GM12878 (cell line): ENCODE measurements at regions of chr17 and their contacts with region 1.

Region 1: DNA sequence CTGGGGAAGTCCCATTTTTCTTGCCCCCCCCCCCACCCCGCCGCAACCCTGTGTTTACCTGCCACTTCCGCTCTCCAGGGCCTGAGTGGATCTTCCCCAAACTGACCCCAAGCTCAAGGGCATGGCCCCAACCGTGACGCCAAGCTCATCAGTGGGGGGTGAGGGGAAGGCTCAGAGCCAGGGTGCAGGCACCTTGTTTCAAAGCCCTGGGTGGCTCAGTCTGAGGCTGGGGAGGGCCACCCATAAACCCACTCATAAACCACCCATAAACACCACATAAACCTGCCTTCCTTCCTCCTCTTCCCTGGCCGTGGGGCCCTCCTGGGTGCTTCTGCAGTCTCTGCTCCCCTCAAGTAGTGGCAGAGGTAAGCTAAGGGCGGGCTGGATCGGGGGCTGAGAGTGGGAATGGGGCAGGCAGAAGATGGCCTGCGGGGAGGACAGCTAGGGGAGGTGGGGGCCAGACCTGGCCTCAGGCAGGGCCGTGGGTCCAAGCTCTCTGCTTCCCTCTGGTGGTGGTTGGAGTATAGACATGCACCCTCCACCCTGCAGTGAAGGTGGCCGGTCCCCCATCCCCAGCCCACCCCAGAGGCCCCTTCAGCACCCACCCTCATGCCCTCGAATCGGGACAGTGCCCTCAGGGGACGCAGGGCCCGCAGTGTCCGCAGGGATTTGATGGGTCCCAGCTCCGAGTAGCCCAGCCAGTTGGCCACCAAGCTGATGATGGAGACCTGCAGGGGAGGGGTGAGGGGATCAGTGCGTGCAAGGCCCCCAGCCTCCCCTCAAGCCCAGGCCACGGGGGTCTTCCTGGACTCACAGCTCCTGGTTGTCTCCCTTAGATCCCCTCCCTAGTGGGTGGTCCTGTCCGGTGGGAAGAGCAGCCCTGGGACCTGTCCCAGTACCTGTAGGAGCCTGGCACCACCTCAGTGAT is 14.6 kb upstream of the CD79B start:
- DNase-seq: no peak
- ATAC-seq: peak; percentile 92
- H3K4me3 ChIP-seq: peak overlapping the region; percentile 39; the same call in 1 of the 2 replicates
- H3K27ac ChIP-seq: peak overlapping the region; percentile 86
- H3K4me1 ChIP-seq: peaks cover 18% of the 10 kb centered on the region
- H3K27me3 ChIP-seq: no peaks in the 10 kb centered on the region
- CTCF ChIP-seq: peak; percentile 65 to 85 (median 78)
- EP300 ChIP-seq: no peak
- POLR2A ChIP-seq: 0 out of 2 replicates have a peak, but pooled peaks have one; percentile 49
- RAD21 ChIP-seq: peak; percentile 65

Region 2: GRCh38 chr17:63880681-63881080 is 66.0 kb before region 1 on chr17:
- CTCF ChIA-PET with region 1: no interaction called
- POLR2A ChIA-PET with region 1: no interaction called
- RAD21 ChIA-PET with region 1: no interaction called
- SMC1A ChIA-PET with region 1: no interaction called
- in situ Hi-C with region 1: no loop called
- intact Hi-C with region 1: no loop called
- DNase-seq: no peak
- ATAC-seq: no peak
- H3K4me3 ChIP-seq: no peak overlapping the region
- H3K27ac ChIP-seq: no peak overlapping the region
- H3K4me1 ChIP-seq: no peaks in the 10 kb centered on the region
- H3K27me3 ChIP-seq: no peaks in the 10 kb centered on the region
- CTCF ChIP-seq: no peak
- EP300 ChIP-seq: no peak
- POLR2A ChIP-seq: no peak
- RAD21 ChIP-seq: no peak

Region 3: DNA sequence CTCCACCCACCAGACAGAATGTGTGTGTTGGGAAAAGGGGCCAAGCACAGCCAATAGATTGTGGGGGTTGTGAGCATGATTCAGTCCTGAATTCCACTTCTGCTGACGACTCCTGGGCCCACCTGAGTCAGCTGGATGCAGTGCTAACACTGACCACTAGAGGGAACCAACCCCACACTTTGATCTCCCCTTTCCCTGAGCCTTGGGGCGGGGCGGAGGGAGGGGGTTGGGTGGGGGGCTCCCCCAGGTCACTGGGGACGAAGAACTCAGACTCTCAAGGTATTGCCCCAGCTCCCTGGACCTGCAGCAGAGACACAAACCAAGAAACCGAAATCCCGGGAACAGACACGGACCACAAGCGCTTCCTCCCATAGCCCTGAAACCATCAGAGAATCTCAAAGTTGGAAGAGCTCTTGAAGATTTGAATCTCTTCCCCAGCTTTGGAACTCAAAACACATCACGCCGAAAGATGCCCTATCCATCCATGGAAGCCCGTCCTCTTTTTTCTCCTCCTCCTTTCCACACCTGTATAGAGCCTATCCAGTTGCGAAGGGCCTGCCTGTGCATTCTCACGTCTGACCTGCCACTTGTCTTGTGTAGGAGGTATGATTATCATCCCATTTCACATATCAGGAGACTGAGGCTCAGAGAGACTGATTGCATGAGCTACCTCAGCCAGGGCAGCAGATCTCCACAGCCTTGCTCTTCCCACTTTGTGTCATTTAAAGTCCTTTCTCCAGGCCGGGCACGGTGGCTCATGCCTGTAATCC is 34.9 kb before region 1 on chr17:
- CTCF ChIA-PET with region 1: interaction called, 481 read pairs
- POLR2A ChIA-PET with region 1: interaction called, 4 read pairs
- RAD21 ChIA-PET with region 1: interaction called, 288 read pairs
- SMC1A ChIA-PET with region 1: interaction called, 248 read pairs
- in situ Hi-C with region 1: no loop called
- intact Hi-C with region 1: no loop called
- DNase-seq: no peak
- ATAC-seq: peak; percentile 78
- H3K4me3 ChIP-seq: no peak overlapping the region
- H3K27ac ChIP-seq: no peak overlapping the region
- H3K4me1 ChIP-seq: peaks cover 5% of the 10 kb centered on the region
- H3K27me3 ChIP-seq: peaks cover 0 to 2% of the 10 kb centered on the region in 2 experiments; a peak in 2 of 4 replicates
- CTCF ChIP-seq: peak; percentile 58 to 79 (median 66)
- EP300 ChIP-seq: no peak
- POLR2A ChIP-seq: no peak
- RAD21 ChIP-seq: peak; percentile 68

Region 4: DNA sequence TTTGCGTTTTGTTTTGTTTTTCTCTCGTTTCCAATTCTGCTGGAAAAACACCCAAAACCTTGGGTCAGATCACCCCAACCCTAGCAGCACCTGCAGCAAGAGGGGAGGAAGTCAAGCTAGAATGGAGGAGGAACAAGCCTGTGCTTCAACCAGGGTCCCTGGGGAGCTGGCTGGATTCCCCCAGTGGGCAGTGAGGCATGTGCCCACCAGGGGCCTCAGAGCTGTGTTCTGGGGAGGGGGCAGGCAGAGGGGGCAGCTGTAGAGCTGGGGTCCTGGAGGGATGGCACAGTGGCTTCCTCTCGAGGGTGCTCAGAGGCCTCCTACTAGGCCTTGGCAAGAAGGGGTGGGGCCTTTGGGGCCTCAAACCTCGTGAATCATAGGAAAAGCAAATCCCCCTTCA is 21.1 kb before region 1 on chr17:
- CTCF ChIA-PET with region 1: interaction called, 481 read pairs
- POLR2A ChIA-PET with region 1: interaction called, 68 read pairs
- RAD21 ChIA-PET with region 1: interaction called, 288 read pairs
- SMC1A ChIA-PET with region 1: interaction called, 248 read pairs
- in situ Hi-C with region 1: no loop called
- intact Hi-C with region 1: no loop called
- DNase-seq: no peak
- ATAC-seq: peak; percentile 29
- H3K4me3 ChIP-seq: no peak overlapping the region
- H3K27ac ChIP-seq: no peak overlapping the region; the same call in 1 of the 2 replicates
- H3K4me1 ChIP-seq: peaks cover 47% of the 10 kb centered on the region
- H3K27me3 ChIP-seq: no peaks in the 10 kb centered on the region
- CTCF ChIP-seq: no peak
- EP300 ChIP-seq: no peak
- POLR2A ChIP-seq: no peak
- RAD21 ChIP-seq: no peak

Region 5: GRCh38 chr17:63984651-63985386 is 38.1 kb after region 1 on chr17:
- CTCF ChIA-PET with region 1: interaction called, 26 read pairs
- POLR2A ChIA-PET with region 1: no interaction called
- RAD21 ChIA-PET with region 1: interaction called, 9 read pairs
- SMC1A ChIA-PET with region 1: interaction called, 12 read pairs
- in situ Hi-C with region 1: no loop called
- intact Hi-C with region 1: no loop called
- DNase-seq: no peak
- ATAC-seq: peak; percentile 54
- H3K4me3 ChIP-seq: no peak overlapping the region
- H3K27ac ChIP-seq: no peak overlapping the region
- H3K4me1 ChIP-seq: no peaks in the 10 kb centered on the region
- H3K27me3 ChIP-seq: no peaks in the 10 kb centered on the region
- CTCF ChIP-seq: no peak
- EP300 ChIP-seq: no peak
- POLR2A ChIP-seq: no peak
- RAD21 ChIP-seq: no peak

Region 6: GRCh38 chr17:64117981-64118979 is 171.6 kb after region 1 on chr17:
- CTCF ChIA-PET with region 1: interaction called, 10 read pairs
- POLR2A ChIA-PET with region 1: no interaction called
- RAD21 ChIA-PET with region 1: no interaction called
- SMC1A ChIA-PET with region 1: no interaction called
- in situ Hi-C with region 1: no loop called
- intact Hi-C with region 1: no loop called
- DNase-seq: no peak
- ATAC-seq: no peak
- H3K4me3 ChIP-seq: no peak overlapping the region
- H3K27ac ChIP-seq: no peak overlapping the region
- H3K4me1 ChIP-seq: peaks cover 30% of the 10 kb centered on the region
- H3K27me3 ChIP-seq: no peaks in the 10 kb centered on the region
- CTCF ChIP-seq: no peak
- EP300 ChIP-seq: no peak
- POLR2A ChIP-seq: no peak
- RAD21 ChIP-seq: no peak